ENCODE measurements at regions of chr6 and their contacts with region 1.

Region 1: GRCh38 chr6:128131566-128131965 is 230.7 kb upstream of the THEMIS start:
- DNase-seq: no peak
- H3K4me3 ChIP-seq: no peak overlapping the region
- H3K27ac ChIP-seq: no peak overlapping the region
- H3K4me1 ChIP-seq: peaks cover 12% of the 10 kb centered on the region
- H3K27me3 ChIP-seq: no peaks in the 10 kb centered on the region
- CTCF ChIP-seq: no peak

Region 2: DNA sequence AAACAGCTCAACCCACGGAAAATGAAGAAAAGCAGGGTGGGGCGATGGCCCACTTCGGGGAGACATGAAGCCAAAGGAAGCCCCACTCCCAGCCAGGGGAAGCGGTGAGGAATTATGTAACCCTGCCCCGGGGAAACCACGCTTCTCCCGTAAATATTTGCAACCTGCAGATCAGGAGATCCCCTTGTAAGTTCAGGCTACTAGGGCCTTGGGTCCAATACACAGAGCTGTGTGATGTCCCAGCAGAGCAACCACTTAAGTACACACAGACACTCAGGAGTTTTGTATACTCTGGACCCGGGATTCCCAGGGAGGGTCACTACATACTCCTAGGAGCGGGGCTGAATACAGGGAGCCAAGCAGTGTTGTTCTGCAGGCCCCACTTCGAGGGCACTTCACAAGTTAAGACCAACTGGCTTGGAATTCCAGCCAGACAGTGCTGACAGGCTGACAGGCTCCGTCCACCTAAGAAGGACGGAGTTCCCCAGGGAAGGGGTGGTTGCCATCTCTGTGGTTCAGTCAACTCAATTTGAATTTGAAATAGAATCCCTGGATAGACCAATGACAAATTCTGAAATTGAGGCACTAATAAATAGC is 70.7 kb after region 1 on chr6:
- CTCF ChIA-PET with region 1: interaction called, 10 read pairs
- POLR2A ChIA-PET with region 1: no interaction called
- intact Hi-C with region 1: no loop called
- DNase-seq: peak in 1 of 2 experiments; percentile 33
- H3K4me3 ChIP-seq: no peak overlapping the region
- H3K27ac ChIP-seq: no peak overlapping the region
- H3K4me1 ChIP-seq: peaks cover 18% of the 10 kb centered on the region
- H3K27me3 ChIP-seq: no peaks in the 10 kb centered on the region
- CTCF ChIP-seq: no peak

Region 3: GRCh38 chr6:128412680-128413079 is 281.1 kb after region 1 on chr6:
- CTCF ChIA-PET with region 1: no interaction called
- POLR2A ChIA-PET with region 1: no interaction called
- intact Hi-C with region 1: no loop called
- DNase-seq: no peak
- H3K4me3 ChIP-seq: no peak overlapping the region
- H3K27ac ChIP-seq: no peak overlapping the region
- H3K4me1 ChIP-seq: no peaks in the 10 kb centered on the region
- H3K27me3 ChIP-seq: no peaks in the 10 kb centered on the region
- CTCF ChIP-seq: no peak

Measured in PC-9 (cell line).